ENCODE measurements at regions of chr14 and their contacts with region 1.

Region 1: GRCh38 chr14:91323671-91324605 is 79.4 kb upstream of the GPR68 start:
- DNase-seq: peak; percentile 85
- H3K4me3 ChIP-seq: no peak overlapping the region
- H3K27ac ChIP-seq: peak overlapping the region; percentile 8 to 18
- H3K4me1 ChIP-seq: no peaks in the 10 kb centered on the region
- H3K27me3 ChIP-seq: no peaks in the 10 kb centered on the region
- CTCF ChIP-seq: peak; percentile 96 to 99 (median 98)
- POLR2A ChIP-seq: no peak

Region 2: DNA sequence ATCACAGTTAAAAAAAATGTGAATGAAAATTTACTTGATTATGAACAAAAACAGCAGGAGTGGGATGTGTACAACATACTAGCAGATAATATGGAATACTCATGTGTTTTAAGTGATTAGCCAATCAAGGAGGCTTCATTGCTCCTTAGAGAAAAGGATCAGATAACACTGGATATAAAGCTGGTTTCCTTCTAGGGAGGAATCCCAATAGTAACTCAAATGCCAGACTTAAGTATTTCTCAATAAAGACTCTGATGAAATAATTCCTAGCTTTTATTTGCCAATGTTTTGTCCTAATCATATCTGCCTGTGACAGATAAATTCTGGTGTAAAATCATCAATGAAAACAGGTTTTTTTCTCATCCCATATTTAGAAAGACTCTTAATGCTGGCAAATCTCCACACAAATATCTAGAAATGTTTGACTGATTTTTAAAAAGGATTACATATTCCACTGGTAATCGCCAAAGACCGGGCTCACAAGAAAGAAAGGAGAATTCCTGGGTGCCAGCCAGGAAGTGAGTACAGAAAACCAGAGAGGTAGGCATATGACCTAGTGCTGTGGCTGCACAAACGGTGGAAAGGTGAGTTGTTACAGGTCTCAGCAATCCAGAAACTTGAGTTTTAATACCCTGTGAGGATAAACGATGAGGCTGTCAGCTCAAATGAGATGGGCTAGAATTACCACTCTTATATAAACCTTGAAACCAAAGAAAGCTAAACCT is 399.2 kb before region 1 on chr14:
- intact Hi-C with region 1: no loop called
- DNase-seq: no peak
- H3K4me3 ChIP-seq: no peak overlapping the region
- H3K27ac ChIP-seq: no peak overlapping the region
- H3K4me1 ChIP-seq: no peaks in the 10 kb centered on the region
- H3K27me3 ChIP-seq: no peaks in the 10 kb centered on the region
- CTCF ChIP-seq: no peak
- POLR2A ChIP-seq: no peak

Region 3: GRCh38 chr14:91418387-91419043 is 94.6 kb after region 1 on chr14:
- intact Hi-C with region 1: loop called (anchors 1 kb)
- DNase-seq: peak; percentile 55
- H3K4me3 ChIP-seq: peak overlapping the region; percentile 61 to 65
- H3K27ac ChIP-seq: peak overlapping the region in 1 of 2 donors; percentile 79
- H3K4me1 ChIP-seq: peaks cover 7% of the 10 kb centered on the region
- H3K27me3 ChIP-seq: no peaks in the 10 kb centered on the region
- CTCF ChIP-seq: peak; percentile 97 to 99 (median 98)
- POLR2A ChIP-seq: no peak

Region 4: DNA sequence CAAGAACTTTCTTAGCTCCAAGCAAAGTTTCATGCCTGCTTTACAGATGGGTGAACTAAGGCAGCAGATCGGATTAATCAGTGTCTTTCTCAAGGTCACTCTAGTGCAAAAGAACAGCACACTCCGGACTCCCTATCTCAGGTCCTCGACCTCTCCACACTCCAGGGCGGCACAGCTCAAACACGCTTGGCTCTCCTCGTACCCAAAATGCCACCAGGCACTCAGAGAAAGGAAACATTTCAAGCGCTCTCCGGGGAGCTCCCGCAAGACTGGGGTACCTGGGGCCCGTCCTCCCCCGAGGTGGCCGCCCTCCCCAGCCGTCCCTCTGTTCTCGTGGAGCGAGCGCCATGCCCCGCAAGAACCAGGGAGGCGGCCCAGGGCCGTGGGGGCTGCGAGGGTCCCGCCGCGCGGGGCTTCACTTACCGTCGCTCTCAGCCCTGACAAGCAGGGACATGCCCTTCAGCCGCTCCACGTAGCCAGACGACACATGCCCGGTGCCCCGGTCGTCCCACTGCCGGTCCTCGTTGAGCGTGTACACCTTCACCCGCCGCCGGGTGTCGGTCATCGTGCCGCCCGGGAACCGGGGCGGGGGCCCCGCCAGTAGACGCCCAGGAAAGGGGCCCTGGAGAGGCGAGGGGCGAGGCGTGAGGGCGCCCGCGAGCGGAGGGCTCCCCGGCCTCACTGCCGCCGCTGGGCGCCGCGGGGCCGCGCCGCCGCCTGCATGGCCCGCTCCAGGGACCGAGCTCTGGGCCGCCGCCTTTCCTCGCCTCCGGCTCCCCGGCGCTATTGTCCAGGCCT is 185.3 kb after region 1 on chr14:
- intact Hi-C with region 1: loop called (anchors 5 kb)
- DNase-seq: peak; percentile 24
- H3K4me3 ChIP-seq: peak overlapping the region; percentile 84 to 98
- H3K27ac ChIP-seq: peak overlapping the region; percentile 98 to 99
- H3K4me1 ChIP-seq: peaks cover 4% of the 10 kb centered on the region
- H3K27me3 ChIP-seq: no peaks in the 10 kb centered on the region
- CTCF ChIP-seq: no peak
- POLR2A ChIP-seq: no peak